ENCODE measurements at regions of chr10 and their contacts with region 1.

Region 1: GRCh38 chr10:100535715-100536353 is at the start of gene HIF1AN:
- DNase-seq: peak; percentile 94
- H3K4me3 Mint-ChIP-seq: no peak within 1 kb of the TSS
- H3K27ac Mint-ChIP-seq: no peak within 1 kb of the TSS
- H3K4me1 Mint-ChIP-seq: peaks cover 7% of the 10 kb centered on the region
- H3K27me3 Mint-ChIP-seq: no peaks in the 10 kb centered on the region
- CTCF ChIP-seq: peak; percentile 87
- total RNA-seq, gene HIF1AN: 40.1 and 41.0 TPM in 2 replicates

Region 2: GRCh38 chr10:100524638-100525037 is 11.2 kb before region 1 on chr10:
- CTCF ChIA-PET with region 1: interaction called, 24 read pairs
- POLR2A ChIA-PET with region 1: interaction called, 12 read pairs
- intact Hi-C with region 1: no loop called
- DNase-seq: no peak
- H3K4me3 Mint-ChIP-seq: no peak overlapping the region
- H3K27ac Mint-ChIP-seq: no peak overlapping the region
- H3K4me1 Mint-ChIP-seq: peaks cover 6% of the 10 kb centered on the region
- H3K27me3 Mint-ChIP-seq: no peaks in the 10 kb centered on the region
- CTCF ChIP-seq: no peak

Region 3: DNA sequence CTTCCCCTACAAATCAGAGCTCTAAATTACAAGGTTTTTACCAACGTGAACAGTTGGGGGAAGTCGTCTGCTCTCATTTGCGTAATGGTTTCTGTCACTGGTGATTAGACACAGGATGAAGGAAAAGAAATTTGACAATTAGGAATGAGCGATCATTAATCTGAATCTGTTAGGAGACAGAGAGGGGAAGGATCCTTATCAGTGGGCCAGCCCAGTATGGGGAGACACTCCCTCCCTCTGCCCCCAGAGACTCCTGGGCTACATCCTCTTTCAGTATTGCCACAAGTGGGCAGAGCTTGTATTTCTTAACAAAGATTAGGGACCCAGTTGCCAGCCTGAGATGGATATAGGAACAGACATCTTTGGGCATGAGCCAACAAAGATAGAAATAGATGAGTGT is 15.4 kb after region 1 on chr10:
- CTCF ChIA-PET with region 1: interaction called, 16 read pairs
- POLR2A ChIA-PET with region 1: interaction called, 14 read pairs
- intact Hi-C with region 1: no loop called
- DNase-seq: no peak
- H3K4me3 Mint-ChIP-seq: no peak overlapping the region
- H3K27ac Mint-ChIP-seq: no peak overlapping the region
- H3K4me1 Mint-ChIP-seq: no peaks in the 10 kb centered on the region
- H3K27me3 Mint-ChIP-seq: no peaks in the 10 kb centered on the region
- CTCF ChIP-seq: no peak